ENCODE measurements at regions of chr18 and their contacts with region 1.

Region 1: DNA sequence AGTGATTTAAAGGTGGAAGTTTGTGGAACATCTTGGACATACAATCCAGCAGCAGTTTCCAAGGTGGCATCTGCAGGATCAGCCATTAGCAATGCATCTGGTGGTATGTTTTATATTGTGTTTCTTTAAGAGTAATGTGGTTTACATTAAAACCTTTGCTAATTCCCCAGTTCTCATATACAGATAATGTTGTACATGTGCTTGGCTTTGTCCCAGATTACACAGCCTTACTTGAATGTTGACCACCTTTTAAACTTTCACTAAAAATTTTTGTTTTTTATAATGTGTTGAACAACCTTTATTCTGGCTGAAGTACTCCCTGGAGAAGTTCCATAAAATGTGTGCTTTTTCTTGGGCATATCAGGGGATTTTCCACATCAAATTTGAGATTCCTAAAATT is 57.5 kb downstream of the MIB1 start:
- DNase-seq: no peak
- H3K4me3 ChIP-seq: no peak overlapping the region
- H3K27ac ChIP-seq: no peak overlapping the region
- H3K4me1 ChIP-seq: no peaks in the 10 kb centered on the region
- CTCF ChIP-seq: no peak

Region 2: GRCh38 chr18:21769206-21769605 is 28.9 kb before region 1 on chr18:
- CTCF ChIA-PET with region 1: no interaction called
- POLR2A ChIA-PET with region 1: interaction called, 13 read pairs
- intact Hi-C with region 1: no loop called
- DNase-seq: no peak
- H3K4me3 ChIP-seq: no peak overlapping the region
- H3K27ac ChIP-seq: no peak overlapping the region
- H3K4me1 ChIP-seq: no peaks in the 10 kb centered on the region
- CTCF ChIP-seq: no peak

Region 3: DNA sequence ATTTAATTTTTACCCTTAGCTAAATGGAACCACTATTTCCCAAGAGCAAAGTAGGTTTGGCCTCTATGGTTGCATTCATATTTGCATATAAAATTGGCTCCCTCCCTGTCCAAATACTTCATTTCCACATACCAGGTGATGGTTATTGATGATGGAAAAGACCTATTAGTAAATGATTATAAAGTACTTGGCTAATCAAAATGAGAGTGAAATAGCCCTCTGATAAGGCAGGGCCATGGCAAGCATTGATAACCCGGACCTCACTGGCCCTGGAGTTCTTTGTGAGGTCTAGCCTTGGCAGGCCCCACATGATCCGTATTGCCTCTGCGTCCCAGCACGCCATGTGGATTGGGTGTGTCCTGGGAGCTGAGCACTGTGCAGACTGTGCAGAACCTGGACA is 170.2 kb after region 1 on chr18:
- CTCF ChIA-PET with region 1: no interaction called
- POLR2A ChIA-PET with region 1: no interaction called
- intact Hi-C with region 1: no loop called
- DNase-seq: no peak
- H3K4me3 ChIP-seq: no peak overlapping the region
- H3K27ac ChIP-seq: no peak overlapping the region
- H3K4me1 ChIP-seq: no peaks in the 10 kb centered on the region
- CTCF ChIP-seq: no peak